Vagina (tissue), 2 donors: ENCODE measurements at regions of chr1 and their contacts with region 1.

Region 1: DNA sequence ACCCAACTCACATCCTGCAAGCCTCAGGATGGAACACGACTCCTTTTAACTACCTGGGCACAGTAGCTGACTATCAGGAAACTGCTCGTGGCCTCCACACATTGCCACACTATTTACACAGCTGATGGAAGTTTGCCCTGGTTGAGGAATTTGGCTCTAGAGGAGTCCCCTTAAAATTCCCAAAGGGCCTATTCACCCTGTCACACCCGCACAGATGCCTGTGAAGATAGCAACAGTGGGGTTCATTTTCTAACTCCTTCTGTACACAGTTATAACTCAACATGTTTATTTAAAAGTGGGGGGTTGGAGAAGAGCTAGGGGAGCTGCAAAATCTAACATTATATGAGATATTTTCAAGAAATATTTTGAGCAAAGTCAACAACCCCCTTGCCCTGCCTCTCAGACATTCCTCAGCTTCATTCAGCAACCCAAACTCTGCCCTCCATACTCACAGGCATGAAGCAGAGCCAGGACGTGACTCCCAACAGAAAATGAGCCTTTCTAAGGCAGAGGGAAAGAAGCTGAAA is 35.8 kb upstream of the CCN1 start:
- DNase-seq: no peak
- H3K4me3 ChIP-seq: no peak overlapping the region
- H3K27ac ChIP-seq: no peak overlapping the region
- H3K4me1 ChIP-seq: peaks cover 18% of the 10 kb centered on the region
- H3K27me3 ChIP-seq: no peaks in the 10 kb centered on the region
- CTCF ChIP-seq: no peak
- POLR2A ChIP-seq: no peak

Region 2: GRCh38 chr1:85438353-85438752 is 106.4 kb before region 1 on chr1:
- intact Hi-C with region 1: no loop called
- DNase-seq: no peak
- H3K4me3 ChIP-seq: no peak overlapping the region
- H3K27ac ChIP-seq: no peak overlapping the region
- H3K4me1 ChIP-seq: no peaks in the 10 kb centered on the region
- H3K27me3 ChIP-seq: no peaks in the 10 kb centered on the region
- CTCF ChIP-seq: no peak
- POLR2A ChIP-seq: no peak

Region 3: GRCh38 chr1:85494904-85495266 is 49.9 kb before region 1 on chr1:
- intact Hi-C with region 1: loop called (anchors 10 kb)
- DNase-seq: no peak
- H3K4me3 ChIP-seq: no peak overlapping the region
- H3K27ac ChIP-seq: no peak overlapping the region
- H3K4me1 ChIP-seq: peaks cover 7% of the 10 kb centered on the region
- H3K27me3 ChIP-seq: no peaks in the 10 kb centered on the region
- CTCF ChIP-seq: no peak
- POLR2A ChIP-seq: no peak

Region 4: DNA sequence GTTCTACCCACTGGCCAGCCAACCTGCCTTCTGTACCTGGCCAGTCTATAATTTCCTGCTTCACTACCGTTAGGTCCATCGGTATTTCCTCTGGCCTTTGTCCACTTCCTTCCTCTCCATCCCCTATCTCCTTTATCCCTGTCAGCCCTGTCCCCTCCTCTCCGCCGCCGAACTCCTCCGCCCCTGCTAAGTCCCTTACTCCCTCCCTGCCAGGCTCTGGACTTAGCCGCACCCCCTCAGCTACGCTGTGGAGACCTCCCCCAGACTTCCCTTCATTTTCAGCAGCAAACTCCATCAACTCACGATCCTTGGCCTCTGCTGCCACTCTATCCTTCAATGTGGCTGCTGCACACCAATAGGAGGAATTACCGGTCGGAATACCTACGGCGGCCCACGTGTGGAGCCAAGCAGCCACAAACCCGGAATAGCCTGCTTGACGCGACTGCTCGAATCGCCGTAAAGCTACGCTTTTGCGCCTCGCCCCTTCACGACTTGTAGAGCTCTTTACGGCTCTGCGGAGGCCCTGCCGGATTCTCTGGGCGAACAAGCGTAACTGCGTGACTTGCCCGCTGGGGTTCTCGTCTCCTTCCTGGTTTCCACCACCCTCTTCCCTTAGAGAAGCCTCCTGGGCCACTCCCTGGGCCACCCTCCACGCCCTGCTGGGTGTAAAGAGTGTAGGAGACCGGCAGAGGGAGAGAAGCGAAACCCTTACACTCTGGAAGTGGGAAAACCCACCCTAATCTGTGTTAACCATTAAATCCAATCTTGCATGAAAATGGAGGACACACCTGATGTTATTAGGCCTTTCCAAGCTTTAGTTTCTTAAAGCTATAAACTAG is 163.5 kb after region 1 on chr1 and contains the start of gene ZNHIT6:
- intact Hi-C with region 1: no loop called
- DNase-seq: peak in 1 of 2 donors; percentile 95
- H3K4me3 ChIP-seq: peak within 1 kb of the TSS; percentile 87 to 89
- H3K27ac ChIP-seq: peak within 1 kb of the TSS; percentile 87
- H3K4me1 ChIP-seq: peaks cover 30% of the 10 kb centered on the region
- H3K27me3 ChIP-seq: no peaks in the 10 kb centered on the region
- CTCF ChIP-seq: peak in 1 of 3 experiments; percentile 18
- POLR2A ChIP-seq: peak in 1 of 2 donors; percentile 4
- total RNA-seq, gene ZNHIT6: 12.0 TPM

Region 5: DNA sequence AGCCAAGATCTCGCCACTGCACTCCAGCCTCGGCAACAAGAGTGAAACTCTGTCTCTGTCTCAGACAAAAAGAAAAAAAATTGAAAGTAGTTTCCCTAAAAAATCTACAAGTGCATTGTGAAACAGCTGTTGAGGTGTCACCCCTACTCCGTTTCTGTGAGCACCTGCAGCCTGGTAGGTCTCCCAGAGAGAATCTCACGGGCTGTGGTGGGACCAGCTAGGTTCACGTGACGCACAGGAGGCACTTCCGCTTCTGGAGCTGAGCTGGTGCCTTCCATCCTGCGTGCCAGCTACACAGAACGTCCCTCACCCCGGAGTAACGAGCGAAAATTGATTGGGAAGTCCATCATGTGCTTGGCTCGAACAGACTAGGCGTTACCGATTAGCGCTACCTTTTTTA is 545.0 kb after region 1 on chr1:
- intact Hi-C with region 1: no loop called
- DNase-seq: no peak
- H3K4me3 ChIP-seq: no peak overlapping the region
- H3K27ac ChIP-seq: no peak overlapping the region
- H3K4me1 ChIP-seq: no peaks in the 10 kb centered on the region
- H3K27me3 ChIP-seq: no peaks in the 10 kb centered on the region
- CTCF ChIP-seq: no peak
- POLR2A ChIP-seq: no peak